Psoas muscle (tissue), 8 donors: ENCODE measurements at regions of chr7 and their contacts with region 1.

Region 1: GRCh38 chr7:134432296-134433152 is 26.4 kb downstream of the AKR1B1 start:
- DNase-seq: peak; percentile 87 to 90
- ATAC-seq: peak; percentile 97 to 99 (median 98)
- H3K4me3 ChIP-seq: peak overlapping the region; percentile 62
- H3K27ac ChIP-seq: peak overlapping the region; percentile 82
- H3K4me1 ChIP-seq: peaks cover 7% of the 10 kb centered on the region
- H3K27me3 ChIP-seq: no peaks in the 10 kb centered on the region
- CTCF ChIP-seq: peak; percentile 70

Region 2: GRCh38 chr7:133512560-133512959 is 920.0 kb before region 1 on chr7:
- intact Hi-C with region 1: no loop called
- DNase-seq: no peak
- ATAC-seq: no peak
- H3K4me3 ChIP-seq: no peak overlapping the region
- H3K27ac ChIP-seq: no peak overlapping the region
- H3K4me1 ChIP-seq: no peaks in the 10 kb centered on the region
- H3K27me3 ChIP-seq: no peaks in the 10 kb centered on the region
- CTCF ChIP-seq: no peak

Region 3: DNA sequence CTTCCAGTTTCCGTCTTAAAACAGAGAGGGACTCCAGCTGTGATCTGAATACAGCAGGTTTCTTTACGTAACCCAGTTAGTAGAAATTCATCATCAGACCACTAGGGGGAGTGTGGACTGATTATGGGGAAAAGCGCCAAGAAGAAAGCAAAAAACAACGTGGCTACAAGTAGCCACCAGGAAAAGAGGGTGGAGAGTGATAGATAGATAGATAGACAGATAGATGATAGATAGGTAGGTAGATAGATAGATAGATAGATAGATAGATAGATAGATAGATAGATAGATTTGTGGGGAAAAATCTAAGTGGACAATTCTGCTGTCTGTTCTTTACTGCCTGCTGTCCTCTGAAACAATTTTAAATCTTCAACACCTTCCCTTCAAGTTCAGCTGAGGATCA is 82.1 kb after region 1 on chr7:
- intact Hi-C with region 1: loop called (anchors 1 to 2 kb)
- DNase-seq: no peak
- ATAC-seq: peak; percentile 62 to 77 (median 66)
- H3K4me3 ChIP-seq: no peak overlapping the region
- H3K27ac ChIP-seq: peak overlapping the region; percentile 84
- H3K4me1 ChIP-seq: peaks cover 17% of the 10 kb centered on the region
- H3K27me3 ChIP-seq: no peaks in the 10 kb centered on the region
- CTCF ChIP-seq: peak; percentile 84

Region 4: GRCh38 chr7:134547397-134548054 is 115.0 kb after region 1 on chr7:
- intact Hi-C with region 1: loop called (anchors 2 kb)
- DNase-seq: peak; percentile 75 to 88
- ATAC-seq: peak; percentile 80 to 83 (median 81)
- H3K4me3 ChIP-seq: peak overlapping the region; percentile 73
- H3K27ac ChIP-seq: peak overlapping the region; percentile 91
- H3K4me1 ChIP-seq: peaks cover 27% of the 10 kb centered on the region
- H3K27me3 ChIP-seq: no peaks in the 10 kb centered on the region
- CTCF ChIP-seq: peak; percentile 89

Region 5: DNA sequence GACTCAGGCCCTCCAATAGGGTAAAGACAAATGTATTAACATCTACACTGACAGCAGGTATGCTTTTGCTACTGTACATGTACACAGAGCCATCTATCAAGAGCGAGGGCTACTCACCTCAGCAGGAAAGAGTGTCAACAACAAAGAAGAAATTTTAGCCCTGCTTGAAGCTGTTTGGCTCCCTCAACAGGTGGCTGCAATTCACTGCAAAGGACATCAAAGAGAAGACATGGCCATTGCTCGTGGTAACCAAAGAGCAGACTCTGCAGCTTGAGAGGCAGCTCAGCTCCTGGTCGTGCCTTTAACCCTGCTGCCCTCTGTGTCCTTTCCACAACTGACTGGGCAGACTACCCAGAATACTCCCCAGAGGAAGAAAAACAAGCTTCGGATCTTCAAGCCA is 121.5 kb after region 1 on chr7:
- intact Hi-C with region 1: loop called (anchors 2 kb)
- DNase-seq: no peak
- ATAC-seq: no peak
- H3K4me3 ChIP-seq: no peak overlapping the region
- H3K27ac ChIP-seq: no peak overlapping the region
- H3K4me1 ChIP-seq: peaks cover 10% of the 10 kb centered on the region
- H3K27me3 ChIP-seq: no peaks in the 10 kb centered on the region
- CTCF ChIP-seq: peak; percentile 14

Region 6: GRCh38 chr7:134605973-134606923 is 173.7 kb after region 1 on chr7:
- intact Hi-C with region 1: loop called (anchors 1 to 5 kb)
- DNase-seq: peak; percentile 62 to 67
- ATAC-seq: peak; percentile 87 to 96 (median 90)
- H3K4me3 ChIP-seq: no peak overlapping the region
- H3K27ac ChIP-seq: no peak overlapping the region
- H3K4me1 ChIP-seq: no peaks in the 10 kb centered on the region
- H3K27me3 ChIP-seq: peaks cover 0 to 3% (median 0%) of the 10 kb centered on the region in 3 donors
- CTCF ChIP-seq: peak; percentile 94